ENCODE measurements at regions of chr13 and their contacts with region 1.

Region 1: DNA sequence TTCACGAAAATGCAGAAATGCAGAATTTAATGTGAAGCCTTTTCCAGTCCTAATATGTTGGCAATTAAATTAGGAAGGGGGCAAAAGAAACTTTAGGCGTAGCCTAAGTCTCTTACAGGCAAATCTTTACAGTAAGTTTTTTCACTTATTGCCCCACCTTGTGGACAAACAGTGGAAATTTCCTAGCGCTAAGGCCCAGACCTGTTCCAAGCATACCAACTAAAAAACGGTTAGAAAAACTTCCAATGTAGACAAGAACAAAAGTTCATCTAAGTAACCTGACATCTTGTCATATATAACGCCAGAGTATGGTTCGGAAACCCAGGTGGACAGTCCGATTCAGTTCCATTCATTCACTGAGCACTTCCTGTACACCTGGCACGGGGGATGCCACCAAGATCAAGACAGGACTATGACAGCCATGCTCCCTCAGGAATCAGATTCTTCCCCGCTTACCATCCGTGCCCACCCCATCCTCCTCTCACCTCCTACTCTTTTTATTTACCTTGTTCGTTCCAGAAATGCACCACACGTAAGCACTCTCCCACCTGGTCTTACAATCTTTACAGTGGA is 4.9 kb downstream of the ZAR1L start:
- DNase-seq: peak in 1 of 2 donors; percentile 2
- ATAC-seq: peak in 1 of 2 donors; percentile 81
- H3K4me3 ChIP-seq: peak overlapping the region in 3 of 4 donors; percentile 20 to 37 (median 31)
- H3K27ac ChIP-seq: no peak overlapping the region
- H3K4me1 ChIP-seq: no peaks in the 10 kb centered on the region
- H3K27me3 ChIP-seq: no peaks in the 10 kb centered on the region
- CTCF ChIP-seq: peak; percentile 38 to 71 (median 61)
- POLR2A ChIP-seq: no peak

Region 2: GRCh38 chr13:32019612-32020233 is 290.5 kb before region 1 on chr13:
- in situ Hi-C with region 1: loop called in 1 of 4 experiments (anchors 25 kb)
- intact Hi-C with region 1: loop called (anchors 5 kb)
- DNase-seq: peak in 1 of 2 donors; percentile 8
- ATAC-seq: peak in 1 of 2 donors; percentile 71
- H3K4me3 ChIP-seq: no peak overlapping the region
- H3K27ac ChIP-seq: no peak overlapping the region
- H3K4me1 ChIP-seq: peaks cover 0 to 8% of the 10 kb centered on the region in 2 donors
- H3K27me3 ChIP-seq: no peaks in the 10 kb centered on the region
- CTCF ChIP-seq: peak; percentile 41 to 70 (median 52)
- POLR2A ChIP-seq: no peak

Region 3: GRCh38 chr13:32246468-32246867 is 63.8 kb before region 1 on chr13:
- in situ Hi-C with region 1: no loop called
- intact Hi-C with region 1: loop called (anchors 2 kb)
- DNase-seq: peak in 1 of 2 donors; percentile 35
- ATAC-seq: peak; percentile 66 to 71
- H3K4me3 ChIP-seq: no peak overlapping the region
- H3K27ac ChIP-seq: no peak overlapping the region
- H3K4me1 ChIP-seq: no peaks in the 10 kb centered on the region
- H3K27me3 ChIP-seq: no peaks in the 10 kb centered on the region
- CTCF ChIP-seq: peak; percentile 6 to 66 (median 64)
- POLR2A ChIP-seq: no peak